ENCODE measurements at regions of chr12 and their contacts with region 1.

Region 1: DNA sequence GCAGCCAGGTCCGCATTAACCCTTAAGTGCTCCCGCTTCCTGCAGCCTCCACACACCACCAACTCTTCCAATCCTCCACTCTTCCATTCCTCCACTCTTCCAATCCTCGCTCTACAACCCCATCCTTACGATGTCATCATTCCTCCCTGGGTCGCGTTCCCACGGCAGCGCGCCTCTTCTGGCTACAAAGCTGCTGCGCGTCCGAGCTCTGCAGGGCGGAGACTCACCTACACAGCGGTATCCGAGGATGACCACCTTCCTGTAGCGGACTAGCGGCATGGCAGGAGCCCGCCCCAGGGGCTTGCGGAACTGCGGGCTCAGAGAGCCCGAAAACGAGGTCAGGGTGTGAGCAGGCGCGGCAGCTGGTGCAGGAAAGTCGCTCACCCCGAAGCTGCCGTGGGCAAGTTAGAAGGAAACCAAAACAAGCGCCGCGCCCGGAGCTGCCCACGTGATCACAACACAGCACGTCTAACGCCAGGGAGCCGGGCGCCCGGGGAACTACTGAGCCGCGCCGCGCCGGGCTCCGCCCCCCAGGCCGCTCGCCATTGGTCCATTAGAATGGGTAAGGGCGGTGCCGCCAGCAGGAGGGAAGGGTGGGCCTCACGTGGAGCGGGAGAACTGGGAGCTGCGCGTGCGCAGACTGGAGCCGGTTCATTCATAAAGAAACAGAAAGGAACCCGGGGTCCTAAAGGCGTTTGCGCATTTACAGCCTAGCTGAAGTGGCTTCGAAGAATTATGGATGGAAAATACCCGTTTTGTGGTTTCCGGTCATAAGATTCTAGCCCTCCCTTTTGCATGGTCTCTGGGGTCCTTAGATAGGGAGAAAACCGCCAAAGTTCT is at the start of gene RHEBL1:
- DNase-seq: peak; percentile 97 to 99 (median 99)
- H3K4me3 ChIP-seq: peak within 1 kb of the TSS; percentile 55 to 99 (median 83)
- H3K27ac ChIP-seq: peak within 1 kb of the TSS in 50 of 59 donors; percentile 9 to 91 (median 64)
- H3K27me3 ChIP-seq: no peaks in the 10 kb centered on the region
- CTCF ChIP-seq: peak in 43 of 56 donors; percentile 10 to 66 (median 40)
- total RNA-seq, gene RHEBL1: 0.55 to 10.5 (median 5.5) TPM

Region 2: DNA sequence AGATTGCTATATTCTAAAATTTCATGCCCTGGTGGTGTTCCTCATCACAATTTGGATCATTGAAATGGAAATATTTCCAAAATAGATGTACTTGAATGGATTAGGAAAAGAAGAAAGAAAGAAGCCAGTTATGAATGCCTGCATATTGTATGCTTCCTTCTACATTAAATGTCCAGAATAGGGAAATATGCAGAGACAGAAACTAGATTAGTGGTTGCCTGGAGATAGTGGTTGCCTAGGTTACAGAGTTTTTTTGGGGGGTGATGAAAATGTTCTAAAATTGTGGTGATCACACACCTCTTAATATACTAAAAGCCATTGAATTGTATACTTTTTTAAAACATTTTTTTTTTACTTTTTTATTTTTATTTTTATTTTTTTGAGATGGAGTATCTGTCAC is 101.2 kb after region 1 on chr12:
- intact Hi-C with region 1: no loop called
- DNase-seq: no peak
- H3K4me3 ChIP-seq: no peak overlapping the region
- H3K27ac ChIP-seq: peak overlapping the region in 20 of 59 donors; percentile 9 to 77 (median 56)
- H3K27me3 ChIP-seq: no peaks in the 10 kb centered on the region
- CTCF ChIP-seq: no peak

Region 3: GRCh38 chr12:49232940-49233841 is 163.5 kb after region 1 on chr12:
- intact Hi-C with region 1: no loop called
- DNase-seq: peak; percentile 49 to 88 (median 85)
- H3K4me3 ChIP-seq: peak overlapping the region; percentile 24 to 86 (median 68)
- H3K27ac ChIP-seq: peak overlapping the region; percentile 95 to 100 (median 99)
- H3K27me3 ChIP-seq: no peaks in the 10 kb centered on the region
- CTCF ChIP-seq: peak in 49 of 56 donors; percentile 6 to 63 (median 37)

Region 4: DNA sequence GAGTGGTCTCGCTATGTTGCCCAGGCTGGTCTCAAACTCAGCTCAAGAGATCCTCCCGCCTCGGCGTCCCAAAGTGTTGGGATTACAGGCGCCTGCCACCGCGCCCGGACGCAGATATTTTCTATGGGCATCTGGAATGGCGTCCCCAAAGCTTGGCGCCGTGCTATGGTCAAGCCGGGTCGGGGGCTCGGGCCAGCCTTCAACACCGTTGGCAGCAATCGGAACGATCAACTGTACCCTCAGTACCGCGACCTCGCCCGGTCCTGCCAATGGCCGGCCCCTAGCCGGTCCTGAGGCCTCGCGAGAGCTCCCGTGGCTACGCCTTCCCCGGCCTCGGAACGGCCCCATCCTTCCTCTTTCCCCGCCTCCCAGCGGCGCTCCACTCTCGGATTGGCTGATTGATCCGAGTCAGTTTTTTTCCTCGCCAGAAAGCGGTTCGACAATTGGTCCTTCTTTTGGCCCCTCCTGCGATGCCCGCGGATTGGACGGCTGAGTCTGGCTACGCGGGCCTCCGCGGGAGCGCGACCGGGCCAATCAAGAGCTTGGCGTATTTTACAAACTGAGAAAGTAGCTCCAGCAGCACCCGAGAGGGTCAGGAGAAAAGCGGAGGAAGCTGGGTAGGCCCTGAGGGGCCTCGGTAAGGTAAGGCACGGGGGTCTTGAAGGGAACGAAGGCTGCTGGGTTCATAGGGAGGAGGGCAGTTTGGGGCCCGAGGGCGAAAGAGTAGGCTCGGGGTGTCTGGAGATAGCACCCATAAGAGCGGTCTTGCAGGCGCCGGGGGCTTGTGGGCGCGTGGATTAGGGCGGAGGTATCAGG is 253.2 kb after region 1 on chr12 and contains the start of gene TROAP:
- intact Hi-C with region 1: loop called in 1 of 2 experiments (anchors 10 kb)
- DNase-seq: peak; percentile 89 to 98 (median 97)
- H3K4me3 ChIP-seq: peak within 1 kb of the TSS; percentile 40 to 95 (median 75)
- H3K27ac ChIP-seq: peak within 1 kb of the TSS in 35 of 59 donors; percentile 9 to 84 (median 57)
- H3K27me3 ChIP-seq: no peaks in the 10 kb centered on the region
- CTCF ChIP-seq: peak in 40 of 56 donors; percentile 9 to 69 (median 37)
- total RNA-seq, gene TROAP: 0.17 to 1.9 (median 0.52) TPM in 18 of 120 experiments, not detected in the others

Measured in dorsolateral prefrontal cortex (tissue), 120 donors.